Lower leg skin (tissue), 4 donors: ENCODE measurements at regions of chr10 and their contacts with region 1.

Region 1: DNA sequence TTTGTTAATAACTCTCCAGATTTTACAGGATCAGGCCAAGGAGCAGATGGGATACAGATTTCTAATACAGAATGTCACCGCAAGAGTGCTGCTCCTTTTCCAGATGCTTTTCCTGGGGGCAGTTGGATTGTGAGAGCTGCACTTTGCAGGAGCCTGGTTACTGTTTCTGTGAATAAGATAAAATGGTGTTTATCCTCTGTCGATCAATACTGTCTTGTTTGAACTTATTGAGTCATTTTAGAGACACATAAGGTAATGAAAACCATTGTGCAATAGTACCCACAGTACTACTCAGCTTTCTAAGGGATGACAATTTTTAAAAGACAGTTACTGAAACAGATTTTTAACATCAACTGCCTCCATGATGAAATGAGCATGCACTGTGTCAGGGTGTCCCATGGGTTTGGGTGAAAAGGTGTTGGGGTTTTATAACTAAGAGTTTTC is 2.9 kb downstream of the A1CF start:
- DNase-seq: no peak
- H3K4me3 ChIP-seq: no peak overlapping the region
- CTCF ChIP-seq: no peak
- POLR2A ChIP-seq: no peak

Region 2: GRCh38 chr10:50605269-50606263 is 277.0 kb before region 1 on chr10:
- intact Hi-C with region 1: no loop called
- DNase-seq: peak in 1 of 2 donors; percentile 65
- H3K4me3 ChIP-seq: no peak overlapping the region
- CTCF ChIP-seq: no peak
- POLR2A ChIP-seq: no peak

Region 3: DNA sequence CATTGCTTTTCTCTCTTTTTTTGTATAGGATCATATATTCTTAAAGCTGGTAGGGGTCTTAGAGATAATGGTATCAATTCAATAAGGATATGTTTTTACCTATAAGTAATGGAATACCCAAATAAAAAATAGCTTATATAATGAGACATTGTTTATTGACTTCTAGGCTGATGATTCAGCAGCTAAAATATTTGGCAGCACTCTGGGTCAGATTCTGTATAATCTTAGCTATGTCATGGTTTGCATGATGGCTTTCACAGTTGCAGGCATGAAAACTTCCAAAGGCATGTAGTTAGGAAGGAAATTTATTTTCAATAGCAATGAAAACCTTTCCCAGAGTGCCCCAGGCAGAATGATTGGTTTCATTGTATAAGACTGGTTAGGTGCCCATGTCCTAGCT is 34.9 kb after region 1 on chr10:
- intact Hi-C with region 1: no loop called
- DNase-seq: no peak
- H3K4me3 ChIP-seq: no peak overlapping the region
- CTCF ChIP-seq: no peak
- POLR2A ChIP-seq: no peak

Region 4: DNA sequence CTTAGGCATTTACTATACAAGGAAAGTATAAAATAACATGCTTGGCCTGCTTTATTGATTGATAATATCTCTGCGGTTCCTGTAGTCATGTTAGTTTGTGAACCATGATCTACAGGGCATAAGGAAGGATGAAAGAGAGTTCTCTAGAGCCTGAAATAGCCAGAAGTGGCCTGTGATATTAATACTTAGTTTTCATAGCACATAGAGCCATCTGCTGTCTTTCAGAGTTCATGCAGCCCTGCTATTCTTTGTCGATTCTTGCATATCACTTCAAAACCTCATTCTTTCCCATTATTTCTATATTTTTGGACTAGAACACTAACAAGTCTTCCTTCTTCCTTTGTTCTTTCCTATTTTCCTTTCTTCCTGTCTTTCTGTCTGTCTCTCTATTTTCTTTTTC is 165.3 kb after region 1 on chr10:
- intact Hi-C with region 1: loop called (anchors 5 kb)
- DNase-seq: no peak
- H3K4me3 ChIP-seq: no peak overlapping the region
- CTCF ChIP-seq: no peak
- POLR2A ChIP-seq: no peak

Region 5: DNA sequence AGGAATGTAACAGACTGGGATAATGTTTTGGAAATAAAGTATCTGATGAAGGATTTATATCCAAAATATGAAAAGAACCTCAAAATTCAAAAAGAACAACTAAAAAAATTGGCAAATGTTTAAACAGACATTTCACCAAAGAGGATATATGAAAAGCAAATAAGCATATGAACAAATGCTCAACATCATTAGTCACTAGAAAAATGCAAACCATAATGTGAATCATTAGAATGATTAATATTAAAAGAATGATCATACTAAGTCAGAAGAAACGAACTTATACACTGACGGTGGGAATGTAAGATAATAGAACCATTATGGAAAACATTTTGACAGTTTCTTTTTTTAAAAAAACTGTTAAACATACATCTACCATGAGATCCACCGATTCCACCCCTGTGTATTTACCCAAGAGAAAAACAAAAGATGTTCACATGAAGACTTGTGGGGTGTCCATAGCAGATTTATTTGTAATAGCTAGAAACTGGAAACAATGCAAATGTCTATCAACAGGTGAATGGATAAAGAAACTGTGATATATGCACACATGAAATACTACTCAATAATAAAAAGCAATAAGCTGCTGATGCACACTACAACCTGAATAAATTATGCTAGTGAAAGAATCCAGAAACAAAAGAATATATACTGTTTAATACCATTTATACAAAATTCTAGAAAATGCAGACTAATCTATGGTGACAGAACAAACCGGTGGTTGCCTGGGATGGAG is 227.4 kb after region 1 on chr10:
- intact Hi-C with region 1: no loop called
- DNase-seq: no peak
- H3K4me3 ChIP-seq: no peak overlapping the region
- CTCF ChIP-seq: no peak
- POLR2A ChIP-seq: no peak